ENCODE measurements at regions of chr7 and their contacts with region 1.

Region 1: DNA sequence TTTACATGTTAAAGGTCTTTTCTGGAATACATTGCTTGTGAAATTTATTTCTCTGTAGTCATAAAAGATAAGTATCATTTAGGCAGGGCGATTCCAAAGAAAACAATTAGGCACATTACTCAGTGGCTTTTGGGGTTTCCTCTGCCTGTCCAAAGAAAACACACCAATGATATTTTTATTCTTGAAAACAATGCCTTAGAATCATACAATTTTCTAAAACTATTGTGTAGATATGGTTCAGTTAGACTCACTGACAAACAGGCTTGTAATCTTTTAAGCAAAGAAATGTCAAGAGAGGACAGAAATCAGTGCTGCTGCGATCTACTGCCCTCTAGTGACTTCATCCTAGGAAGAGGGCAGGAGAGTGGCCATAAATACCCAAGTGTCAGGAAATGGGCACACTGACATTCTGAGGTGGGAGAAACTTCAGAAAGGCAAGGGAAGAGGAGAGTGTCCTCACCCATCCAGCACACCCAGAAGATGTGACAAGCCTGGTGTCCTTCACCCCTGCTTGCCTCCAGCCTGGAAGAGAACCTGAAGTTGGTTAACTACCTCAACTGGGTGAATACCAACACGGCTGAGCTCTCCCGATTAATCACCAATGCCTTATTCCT is 120.5 kb downstream of the GALNT11 start:
- DNase-seq: peak; percentile 64
- H3K4me3 Mint-ChIP-seq: no peak overlapping the region
- H3K27ac Mint-ChIP-seq: peak overlapping the region; percentile 39
- H3K4me1 Mint-ChIP-seq: peaks cover 5% of the 10 kb centered on the region
- H3K27me3 Mint-ChIP-seq: no peaks in the 10 kb centered on the region
- CTCF ChIP-seq: peak; percentile 67

Region 2: GRCh38 chr7:152072421-152072820 is 73.5 kb before region 1 on chr7:
- CTCF ChIA-PET with region 1: no interaction called
- POLR2A ChIA-PET with region 1: no interaction called
- intact Hi-C with region 1: no loop called
- DNase-seq: peak; percentile 37
- H3K4me3 Mint-ChIP-seq: no peak overlapping the region
- H3K27ac Mint-ChIP-seq: peak overlapping the region; percentile 85
- H3K4me1 Mint-ChIP-seq: peaks cover 29% of the 10 kb centered on the region
- H3K27me3 Mint-ChIP-seq: no peaks in the 10 kb centered on the region
- CTCF ChIP-seq: no peak

Region 3: DNA sequence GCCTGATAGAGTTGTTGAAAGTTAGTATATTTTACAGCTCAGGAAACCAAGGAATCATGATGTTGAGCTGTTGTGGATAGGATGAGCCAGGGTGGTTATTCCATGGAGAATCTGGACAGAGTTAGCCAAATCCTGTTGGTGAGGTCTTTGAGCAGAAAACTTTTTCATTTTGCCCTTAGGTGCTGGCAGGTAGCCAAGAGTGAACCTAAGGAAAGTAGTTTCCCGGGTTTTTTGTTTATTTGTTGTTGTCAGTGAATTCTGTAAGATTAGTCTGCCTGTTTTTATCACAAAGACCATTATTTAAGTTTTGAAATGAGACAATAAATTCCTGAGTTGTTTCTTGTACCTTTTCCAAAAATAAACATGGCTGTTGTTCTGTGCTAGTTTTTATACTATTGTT is 59.4 kb before region 1 on chr7:
- CTCF ChIA-PET with region 1: no interaction called
- POLR2A ChIA-PET with region 1: no interaction called
- intact Hi-C with region 1: no loop called
- DNase-seq: peak; percentile 56
- H3K4me3 Mint-ChIP-seq: no peak overlapping the region
- H3K27ac Mint-ChIP-seq: no peak overlapping the region
- H3K4me1 Mint-ChIP-seq: peaks cover 34% of the 10 kb centered on the region
- H3K27me3 Mint-ChIP-seq: no peaks in the 10 kb centered on the region
- CTCF ChIP-seq: no peak

Region 4: GRCh38 chr7:152128741-152129461 is 17.1 kb before region 1 on chr7:
- CTCF ChIA-PET with region 1: interaction called, 11 read pairs
- POLR2A ChIA-PET with region 1: no interaction called
- intact Hi-C with region 1: no loop called
- DNase-seq: no peak
- H3K4me3 Mint-ChIP-seq: no peak overlapping the region
- H3K27ac Mint-ChIP-seq: no peak overlapping the region
- H3K4me1 Mint-ChIP-seq: no peaks in the 10 kb centered on the region
- H3K27me3 Mint-ChIP-seq: no peaks in the 10 kb centered on the region
- CTCF ChIP-seq: no peak

Region 5: GRCh38 chr7:152158801-152159587 is 13.0 kb after region 1 on chr7:
- CTCF ChIA-PET with region 1: interaction called, 48 read pairs
- POLR2A ChIA-PET with region 1: interaction called, 3 read pairs
- intact Hi-C with region 1: no loop called
- DNase-seq: no peak
- H3K4me3 Mint-ChIP-seq: no peak overlapping the region
- H3K27ac Mint-ChIP-seq: no peak overlapping the region
- H3K4me1 Mint-ChIP-seq: no peaks in the 10 kb centered on the region
- H3K27me3 Mint-ChIP-seq: no peaks in the 10 kb centered on the region
- CTCF ChIP-seq: no peak

Region 6: DNA sequence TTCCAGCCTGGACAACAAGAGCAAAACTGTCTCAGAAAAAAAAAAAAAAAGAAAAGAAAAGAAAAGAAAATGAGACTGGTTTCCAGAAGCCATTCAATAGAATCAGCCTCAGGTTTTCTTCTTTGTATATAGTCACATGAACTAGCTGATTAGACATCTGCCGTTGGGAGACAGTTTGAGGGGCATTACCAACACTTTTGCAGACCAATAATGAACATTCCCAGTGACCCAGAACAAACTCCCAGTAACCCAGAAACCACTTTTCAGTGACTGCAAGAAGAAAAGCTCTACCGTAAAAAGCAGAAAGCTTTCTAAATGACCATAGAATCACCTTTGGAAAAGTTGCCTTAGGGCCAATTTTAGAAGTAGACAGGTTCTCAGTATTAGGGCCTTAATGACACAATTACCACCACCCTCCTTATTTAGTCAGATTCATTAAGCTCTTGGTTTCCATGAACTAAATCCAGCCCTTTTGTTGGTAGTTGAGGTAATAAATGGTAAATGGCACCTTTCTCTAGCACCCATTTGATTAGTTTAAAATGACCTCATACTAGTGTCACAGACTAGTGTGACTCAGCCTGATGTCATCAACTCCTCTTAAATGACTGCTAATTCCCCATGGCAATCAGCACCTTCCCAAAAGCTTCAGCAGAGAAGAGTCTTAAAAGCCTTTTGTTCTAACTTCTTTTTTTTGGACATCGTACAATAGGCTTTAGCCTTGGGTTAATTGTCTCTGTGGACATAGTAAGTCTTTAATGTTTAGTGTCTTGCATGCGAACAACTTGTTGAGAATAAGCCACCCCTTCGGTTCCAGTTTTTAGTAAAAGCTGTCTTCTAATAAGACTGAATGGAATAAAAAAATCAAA is 563.6 kb after region 1 on chr7:
- CTCF ChIA-PET with region 1: no interaction called
- POLR2A ChIA-PET with region 1: no interaction called
- intact Hi-C with region 1: loop called (anchors 5 kb)
- DNase-seq: peak; percentile 41
- H3K4me3 Mint-ChIP-seq: no peak overlapping the region
- H3K27ac Mint-ChIP-seq: no peak overlapping the region
- H3K4me1 Mint-ChIP-seq: no peaks in the 10 kb centered on the region
- H3K27me3 Mint-ChIP-seq: no peaks in the 10 kb centered on the region
- CTCF ChIP-seq: no peak

Measured in MCF 10A (cell line).